ENCODE measurements at regions of chr12 and their contacts with region 1.

Region 1: GRCh38 chr12:123150744-123151456 is at the start of gene PITPNM2:
- DNase-seq: peak; percentile 57
- ATAC-seq: peak; percentile 77 to 86
- H3K4me3 ChIP-seq: peak within 1 kb of the TSS; percentile 80
- H3K27ac ChIP-seq: peak within 1 kb of the TSS; percentile 93 to 99
- H3K4me1 ChIP-seq: peaks cover 34% of the 10 kb centered on the region
- CTCF ChIP-seq: peak; percentile 49; the same call in 2 of the 3 replicates
- EP300 ChIP-seq: no peak
- POLR2A ChIP-seq: peak; percentile 25; the same call in 1 of the 2 replicates
- RAD21 ChIP-seq: 0 out of 5 replicates have a peak, but pooled peaks of 1 of the 2 experiments have one; percentile 23
- polyA plus RNA-seq, gene PITPNM2: 2.6 and 4.3 TPM in 2 replicates

Region 2: DNA sequence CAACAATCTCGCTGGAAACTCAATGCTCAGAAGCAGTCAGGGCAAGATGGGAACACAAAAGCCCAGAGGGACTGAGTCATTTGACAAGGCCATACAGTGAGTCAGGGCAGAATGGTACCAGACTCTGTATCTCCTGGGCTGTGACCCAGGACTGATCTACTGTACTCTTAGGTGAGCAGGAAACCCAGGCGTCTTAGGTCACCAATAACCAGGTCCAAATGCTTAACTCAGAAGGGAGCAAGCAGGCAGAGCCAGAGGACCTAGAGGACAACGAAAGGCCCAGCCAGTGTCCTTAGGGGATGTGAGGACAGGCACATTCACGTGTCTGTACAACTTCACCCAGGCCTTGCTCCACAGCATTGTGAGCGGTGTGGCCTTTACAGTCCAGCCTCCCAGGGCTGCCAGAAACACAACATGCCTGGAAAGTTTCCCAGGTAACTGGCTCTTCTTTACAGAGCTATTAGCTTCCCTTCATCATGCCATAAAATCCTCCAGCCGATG is 100.5 kb before region 1 on chr12:
- CTCF ChIA-PET with region 1: interaction called, 104 read pairs
- POLR2A ChIA-PET with region 1: no interaction called
- DNase-seq: no peak
- ATAC-seq: peak; percentile 28 to 74; a peak in 4 of 6 replicates
- H3K4me3 ChIP-seq: no peak overlapping the region
- H3K27ac ChIP-seq: peak overlapping the region in 1 of 2 experiments; percentile 45; a peak in 3 of 6 replicates
- H3K4me1 ChIP-seq: peaks cover 22% of the 10 kb centered on the region
- CTCF ChIP-seq: no peak
- EP300 ChIP-seq: no peak
- POLR2A ChIP-seq: no peak
- RAD21 ChIP-seq: no peak

Region 3: GRCh38 chr12:123089631-123090353 is 61.1 kb before region 1 on chr12:
- CTCF ChIA-PET with region 1: interaction called, 10 read pairs
- POLR2A ChIA-PET with region 1: no interaction called
- DNase-seq: peak; percentile 85 to 88
- ATAC-seq: peak; percentile 48 to 69; a peak in 5 of 6 replicates
- H3K4me3 ChIP-seq: no peak overlapping the region
- H3K27ac ChIP-seq: peak overlapping the region; percentile 70 to 89
- H3K4me1 ChIP-seq: peaks cover 90% of the 10 kb centered on the region
- CTCF ChIP-seq: no peak
- EP300 ChIP-seq: peak in 1 of 2 experiments; percentile 35; a peak in 1 of 5 replicates
- POLR2A ChIP-seq: no peak
- RAD21 ChIP-seq: no peak

Region 4: DNA sequence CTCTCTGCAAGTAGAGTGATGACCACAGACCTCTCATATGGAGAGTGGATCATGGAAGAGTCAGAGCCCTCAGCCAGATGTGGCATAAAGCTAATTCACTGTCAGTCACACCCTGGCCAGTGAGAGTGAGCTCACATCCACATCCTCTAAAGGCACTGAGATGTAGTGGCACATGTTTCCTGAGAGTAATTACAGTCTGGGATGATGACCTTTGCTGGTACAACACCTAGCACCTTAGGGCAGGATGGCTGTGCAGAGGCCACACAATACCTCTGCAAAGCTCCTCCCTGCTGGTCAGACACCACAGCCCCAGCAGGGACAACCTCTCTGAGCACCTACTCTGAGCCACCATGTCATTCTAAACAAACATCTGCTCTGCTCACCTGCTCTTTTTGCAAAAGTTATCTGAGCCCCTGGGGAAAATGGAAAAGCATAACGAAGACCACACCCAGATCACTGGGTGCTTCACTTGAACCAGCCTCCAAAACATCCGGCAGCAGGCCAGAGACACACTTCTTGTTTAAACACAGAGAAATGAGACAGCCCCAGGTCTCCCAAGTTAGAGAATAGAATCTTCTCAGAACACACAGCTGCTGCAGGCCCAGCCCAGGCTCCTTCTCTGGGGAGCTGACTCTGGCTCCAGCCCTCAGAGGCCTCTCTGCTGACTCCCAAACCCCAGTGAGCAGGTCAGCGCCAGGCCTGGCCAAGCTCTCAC is 30.3 kb before region 1 on chr12:
- CTCF ChIA-PET with region 1: interaction called, 12 read pairs
- POLR2A ChIA-PET with region 1: no interaction called
- DNase-seq: no peak
- ATAC-seq: peak; percentile 14 to 24; a peak in 2 of 6 replicates
- H3K4me3 ChIP-seq: no peak overlapping the region
- H3K27ac ChIP-seq: peak overlapping the region; percentile 40 to 77; a peak in 3 of 6 replicates
- H3K4me1 ChIP-seq: peaks cover 40% of the 10 kb centered on the region
- CTCF ChIP-seq: no peak
- EP300 ChIP-seq: no peak
- POLR2A ChIP-seq: no peak
- RAD21 ChIP-seq: no peak

Region 5: DNA sequence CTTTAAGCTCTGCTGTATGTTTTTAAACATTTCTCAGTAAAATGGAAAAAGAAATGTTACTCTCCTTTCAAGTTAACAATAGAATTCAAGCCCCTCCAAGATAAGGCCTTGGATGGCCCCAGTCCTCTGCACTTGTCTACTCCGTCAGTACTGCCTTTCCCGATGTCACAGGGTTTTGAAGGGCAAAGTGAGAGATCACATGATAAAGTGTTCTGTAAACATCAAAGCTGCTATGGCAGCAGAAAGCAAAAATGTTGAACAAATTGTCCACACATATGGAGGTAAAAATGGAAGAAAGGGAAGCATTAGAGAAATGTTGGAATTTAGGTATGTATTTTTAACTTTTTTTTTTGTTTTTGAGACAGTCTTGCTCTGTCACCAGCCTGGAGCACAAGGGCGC is 154.2 kb after region 1 on chr12:
- CTCF ChIA-PET with region 1: no interaction called
- POLR2A ChIA-PET with region 1: no interaction called
- DNase-seq: no peak
- ATAC-seq: no peak
- H3K4me3 ChIP-seq: no peak overlapping the region
- H3K27ac ChIP-seq: no peak overlapping the region
- H3K4me1 ChIP-seq: no peaks in the 10 kb centered on the region
- CTCF ChIP-seq: no peak
- EP300 ChIP-seq: no peak
- POLR2A ChIP-seq: no peak
- RAD21 ChIP-seq: no peak

Region 6: GRCh38 chr12:123379386-123379785 is 228.5 kb after region 1 on chr12:
- CTCF ChIA-PET with region 1: no interaction called
- POLR2A ChIA-PET with region 1: no interaction called
- DNase-seq: no peak
- ATAC-seq: no peak
- H3K4me3 ChIP-seq: no peak overlapping the region
- H3K27ac ChIP-seq: peak overlapping the region in 1 of 2 experiments; percentile 34; a peak in 2 of 6 replicates
- H3K4me1 ChIP-seq: 0 out of 3 replicates have a peak, but pooled peaks cover 5% of the 10 kb centered on the region
- CTCF ChIP-seq: no peak
- EP300 ChIP-seq: no peak
- POLR2A ChIP-seq: no peak
- RAD21 ChIP-seq: no peak

Region 7: GRCh38 chr12:123421314-123421713 is 270.4 kb after region 1 on chr12:
- CTCF ChIA-PET with region 1: no interaction called
- POLR2A ChIA-PET with region 1: no interaction called
- DNase-seq: no peak
- ATAC-seq: peak in 1 of 2 experiments; percentile 73; a peak in 3 of 6 replicates
- H3K4me3 ChIP-seq: no peak overlapping the region
- H3K27ac ChIP-seq: no peak overlapping the region
- H3K4me1 ChIP-seq: no peaks in the 10 kb centered on the region
- CTCF ChIP-seq: no peak
- EP300 ChIP-seq: no peak
- POLR2A ChIP-seq: no peak
- RAD21 ChIP-seq: no peak

Measured in A549 (cell line).